K562 (cell line): ENCODE measurements at regions of chr7 and their contacts with region 1.

Region 1: GRCh38 chr7:154927624-154928143 is 75.2 kb downstream of the PAXIP1 start:
- DNase-seq: peak; percentile 77 to 92 (median 80)
- ATAC-seq: peak; percentile 87
- H3K4me3 ChIP-seq: peak overlapping the region; percentile 47
- H3K27ac ChIP-seq: peak overlapping the region; percentile 23
- H3K4me1 ChIP-seq: peaks cover 6 to 8% of the 10 kb centered on the region in 2 experiments; a peak in 3 of 5 replicates
- H3K27me3 ChIP-seq: peaks cover 0 to 11% of the 10 kb centered on the region in 2 experiments; a peak in 2 of 5 replicates
- CTCF ChIP-seq: peak; percentile 77 to 94 (median 80)
- EP300 ChIP-seq: no peak
- POLR2A ChIP-seq: no peak
- RAD21 ChIP-seq: peak; percentile 91 to 94

Region 2: DNA sequence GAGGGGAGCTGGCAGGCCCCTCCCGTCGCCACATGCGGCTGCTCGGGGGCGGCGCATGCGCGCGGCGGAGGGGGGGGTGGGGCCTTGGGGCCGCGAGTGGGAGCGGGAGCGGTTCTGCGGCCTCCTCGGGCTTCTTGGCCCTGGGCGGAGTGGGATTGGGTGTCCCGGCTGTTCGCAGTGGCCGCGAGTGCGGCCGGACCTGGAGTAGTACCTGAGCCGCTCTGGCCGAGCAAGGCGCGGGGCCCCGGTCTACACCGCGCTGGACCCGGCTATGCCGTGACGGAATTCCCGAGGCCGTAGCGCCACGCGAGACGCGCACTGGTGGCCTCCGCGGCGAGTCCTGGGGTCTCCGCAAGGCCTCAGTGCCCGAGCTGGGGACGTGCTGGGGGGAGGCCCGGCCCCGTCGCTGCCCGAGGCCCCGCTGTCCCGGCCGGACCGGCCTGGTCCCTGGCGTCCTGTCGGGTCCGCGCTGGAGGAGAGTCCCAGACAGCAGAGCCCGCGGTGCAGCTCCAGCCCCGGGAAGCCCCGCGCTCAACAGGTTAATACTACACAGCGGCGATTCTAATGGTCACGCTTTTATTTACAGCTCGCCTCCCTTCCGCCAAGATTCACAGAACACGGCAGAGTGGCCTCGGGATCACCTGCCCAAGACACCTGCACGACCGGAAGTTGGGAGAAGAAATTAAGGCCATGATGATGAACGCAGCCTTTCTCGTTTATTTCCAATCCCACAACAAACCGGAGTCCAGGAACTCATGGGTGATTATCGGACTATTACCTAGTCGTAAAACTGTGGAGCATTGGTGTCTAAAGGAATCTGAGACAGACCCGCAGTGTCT is 75.9 kb after region 1 on chr7:
- CTCF ChIA-PET with region 1: interaction called, 3 read pairs
- POLR2A ChIA-PET with region 1: no interaction called
- in situ Hi-C with region 1: no loop called
- intact Hi-C with region 1: loop called (anchors 1 kb)
- DNase-seq: peak; percentile 90 to 99 (median 99)
- ATAC-seq: peak; percentile 82
- H3K4me3 ChIP-seq: peak overlapping the region; percentile 84
- H3K27ac ChIP-seq: peak overlapping the region; percentile 95
- H3K4me1 ChIP-seq: peaks cover 17 to 19% of the 10 kb centered on the region in 2 experiments
- H3K27me3 ChIP-seq: no peaks in the 10 kb centered on the region
- CTCF ChIP-seq: no peak
- EP300 ChIP-seq: no peak
- POLR2A ChIP-seq: peak; percentile 90
- RAD21 ChIP-seq: no peak

Region 3: DNA sequence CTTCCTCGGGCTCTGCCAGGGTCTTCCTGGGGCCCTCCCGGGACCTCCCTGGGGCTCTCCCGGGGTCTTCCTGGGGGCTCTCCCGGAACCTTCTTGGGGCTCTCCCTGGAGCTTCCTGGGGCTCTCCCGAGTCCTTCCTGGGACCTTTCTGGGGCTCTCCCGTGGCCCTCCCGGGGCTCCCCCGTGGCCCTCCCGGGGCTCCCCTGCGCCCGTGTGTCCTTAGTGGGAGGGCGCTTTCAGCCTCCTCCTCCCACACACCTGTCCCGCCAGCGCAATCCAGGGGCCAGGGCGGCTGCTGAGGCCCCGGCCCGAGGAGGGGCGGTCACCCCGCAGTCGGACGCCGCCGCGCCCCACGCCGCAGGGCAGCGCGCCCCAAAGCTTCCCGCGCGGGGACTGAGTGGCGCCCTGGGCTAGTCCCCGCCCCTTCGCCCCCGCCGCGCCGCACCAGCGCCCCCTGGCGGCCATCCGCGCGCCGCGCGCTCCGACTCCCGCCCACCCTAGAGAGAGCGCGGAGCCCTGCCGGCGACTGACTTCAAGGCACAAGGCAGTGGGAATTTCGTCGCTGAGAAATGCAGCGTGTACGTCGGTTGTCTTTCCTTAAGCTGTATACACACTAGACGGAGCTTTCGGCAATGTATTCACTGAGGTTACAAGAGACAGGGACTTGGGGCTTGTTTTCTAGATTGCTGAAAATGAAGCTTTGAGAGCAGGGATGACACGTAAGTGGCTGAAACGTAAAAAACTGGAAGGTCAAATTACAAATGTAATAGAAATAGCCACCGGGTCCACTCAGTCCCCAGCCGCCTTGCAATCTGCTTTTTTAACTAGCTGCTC is 417.1 kb after region 1 on chr7:
- CTCF ChIA-PET with region 1: interaction called, 32 read pairs
- POLR2A ChIA-PET with region 1: interaction called, 3 read pairs
- in situ Hi-C with region 1: loop called (anchors 5 kb)
- intact Hi-C with region 1: loop called (anchors 1 kb)
- DNase-seq: peak; percentile 90 to 99 (median 96)
- ATAC-seq: peak; percentile 98
- H3K4me3 ChIP-seq: peak overlapping the region; percentile 46
- H3K27ac ChIP-seq: no peak overlapping the region
- H3K4me1 ChIP-seq: peaks cover 0 to 17% of the 10 kb centered on the region in 2 experiments; a peak in 3 of 5 replicates
- H3K27me3 ChIP-seq: peaks cover 29 to 48% of the 10 kb centered on the region in 2 experiments
- CTCF ChIP-seq: peak; percentile 86 to 97 (median 96)
- EP300 ChIP-seq: no peak
- POLR2A ChIP-seq: no peak
- RAD21 ChIP-seq: peak; percentile 95 to 96

Region 4: DNA sequence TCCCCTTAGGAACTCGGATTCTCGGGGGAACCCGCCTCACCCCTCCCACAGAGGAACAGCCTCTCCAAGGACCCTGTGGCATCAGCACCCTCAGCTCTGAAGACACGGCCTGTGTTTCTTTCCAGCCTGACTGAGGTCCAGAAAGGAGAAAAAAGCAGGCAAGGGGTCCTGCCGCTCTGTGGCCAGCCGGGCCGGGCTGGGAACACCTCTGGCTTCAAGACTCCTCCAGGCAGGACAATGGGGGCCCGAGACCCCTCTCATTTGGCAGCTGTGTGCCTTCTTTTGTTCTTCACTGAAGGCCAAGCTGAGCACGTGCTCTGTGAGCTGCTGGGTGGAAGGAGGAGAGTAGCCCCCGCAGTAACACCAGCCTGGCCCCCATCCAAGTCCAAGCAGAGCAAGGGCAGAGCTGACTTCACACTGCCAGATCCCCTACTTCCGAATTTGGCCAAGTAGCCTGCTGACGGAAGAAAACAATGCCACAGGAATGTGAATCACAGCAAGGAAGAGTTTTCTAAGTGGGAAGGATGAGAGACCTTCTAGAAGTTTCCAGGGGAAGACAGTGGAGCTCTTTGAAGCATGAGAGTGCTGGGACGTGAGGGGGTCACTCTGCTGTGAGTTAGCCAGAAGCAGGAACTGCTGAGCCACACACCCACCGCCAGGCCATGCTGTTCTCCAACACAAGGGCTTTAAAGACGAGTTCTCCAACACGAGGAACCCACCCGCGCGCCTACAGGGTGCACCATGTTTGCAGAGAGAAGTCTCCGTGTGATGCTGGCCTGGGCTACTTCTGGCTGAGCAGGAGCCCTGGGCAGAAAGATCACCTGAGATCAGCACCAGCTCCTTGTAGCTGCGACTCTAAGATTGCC is 615.6 kb after region 1 on chr7:
- CTCF ChIA-PET with region 1: no interaction called
- POLR2A ChIA-PET with region 1: no interaction called
- in situ Hi-C with region 1: loop called (anchors 10 kb)
- intact Hi-C with region 1: no loop called
- DNase-seq: peak in 1 of 4 experiments; percentile 18
- ATAC-seq: peak; percentile 66
- H3K4me3 ChIP-seq: no peak overlapping the region
- H3K27ac ChIP-seq: no peak overlapping the region
- H3K4me1 ChIP-seq: no peaks in the 10 kb centered on the region; a peak in 1 of 5 replicates
- H3K27me3 ChIP-seq: peaks cover 83 to 94% of the 10 kb centered on the region in 2 experiments
- CTCF ChIP-seq: peak in 2 of 3 experiments; percentile 38 to 39; a peak in 2 of 6 replicates
- EP300 ChIP-seq: no peak
- POLR2A ChIP-seq: no peak
- RAD21 ChIP-seq: peak in 1 of 2 experiments; percentile 36; a peak in 2 of 4 replicates